Left ventricle myocardium inferior (tissue), 1 donor: ENCODE measurements at regions of chr7 and their contacts with region 1.

Region 1: GRCh38 chr7:41731492-41732435 is 28.9 kb upstream of the INHBA start:
- DNase-seq: no peak
- H3K4me3 ChIP-seq: no peak overlapping the region
- H3K27ac ChIP-seq: no peak overlapping the region
- H3K4me1 ChIP-seq: no peaks in the 10 kb centered on the region
- H3K27me3 ChIP-seq: peaks cover 3% of the 10 kb centered on the region
- CTCF ChIP-seq: peak; percentile 48

Region 2: GRCh38 chr7:40329601-40330153 is 1402.1 kb before region 1 on chr7:
- intact Hi-C with region 1: loop called (anchors 10 kb)
- DNase-seq: no peak
- H3K4me3 ChIP-seq: no peak overlapping the region
- H3K27ac ChIP-seq: no peak overlapping the region
- H3K4me1 ChIP-seq: no peaks in the 10 kb centered on the region
- H3K27me3 ChIP-seq: no peaks in the 10 kb centered on the region
- CTCF ChIP-seq: peak; percentile 80

Region 3: DNA sequence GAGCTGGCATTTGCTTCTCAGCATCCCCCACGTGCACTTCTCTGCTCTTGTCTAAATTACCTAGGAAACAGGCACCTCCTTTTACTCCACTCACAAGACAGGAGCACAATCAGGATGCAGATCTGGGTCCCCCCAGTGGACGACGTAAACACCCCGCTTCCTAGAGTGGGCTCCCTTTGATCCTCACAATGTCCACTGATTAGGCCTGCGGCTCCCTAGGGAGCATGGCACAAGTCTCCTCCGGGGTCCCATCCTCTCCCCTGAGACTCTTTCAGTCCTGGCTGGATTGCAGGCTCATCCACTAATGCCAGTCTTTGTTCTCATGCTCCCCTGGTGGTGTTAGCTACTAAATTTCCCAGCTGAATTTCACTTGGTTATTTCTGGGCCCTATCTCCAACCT is 406.9 kb after region 1 on chr7:
- intact Hi-C with region 1: no loop called
- DNase-seq: no peak
- H3K4me3 ChIP-seq: no peak overlapping the region
- H3K27ac ChIP-seq: no peak overlapping the region
- H3K4me1 ChIP-seq: peaks cover 26% of the 10 kb centered on the region
- H3K27me3 ChIP-seq: no peaks in the 10 kb centered on the region
- CTCF ChIP-seq: no peak